ENCODE measurements at regions of chr19 and their contacts with region 1.

Region 1: GRCh38 chr19:7680606-7681339 is at the start of gene TRAPPC5:
- DNase-seq: peak; percentile 81 to 88 (median 82)
- H3K4me3 ChIP-seq: peak within 1 kb of the TSS; percentile 83
- H3K4me3 Mint-ChIP-seq: peak within 1 kb of the TSS; percentile 86 to 96 (median 86)
- H3K27ac ChIP-seq: peak within 1 kb of the TSS; percentile 82
- H3K27ac Mint-ChIP-seq: peak within 1 kb of the TSS; percentile 81 to 97 (median 92)
- H3K4me1 ChIP-seq: peaks cover 35% of the 10 kb centered on the region
- H3K4me1 Mint-ChIP-seq: peaks cover 30 to 57% (median 37%) of the 10 kb centered on the region in 3 donors
- H3K27me3 ChIP-seq: no peaks in the 10 kb centered on the region
- H3K27me3 Mint-ChIP-seq: peaks cover 12 to 30% of the 10 kb centered on the region in 2 donors
- total RNA-seq, gene TRAPPC5: 63.5 to 70.1 TPM

Region 2: GRCh38 chr19:7562646-7563393 is 118.0 kb before region 1 on chr19:
- CTCF ChIA-PET with region 1: interaction called, 13 read pairs
- POLR2A ChIA-PET with region 1: no interaction called
- DNase-seq: no peak
- H3K4me3 ChIP-seq: no peak overlapping the region
- H3K4me3 Mint-ChIP-seq: no peak overlapping the region
- H3K27ac ChIP-seq: no peak overlapping the region
- H3K27ac Mint-ChIP-seq: no peak overlapping the region
- H3K4me1 ChIP-seq: no peaks in the 10 kb centered on the region
- H3K4me1 Mint-ChIP-seq: no peaks in the 10 kb centered on the region
- H3K27me3 ChIP-seq: no peaks in the 10 kb centered on the region
- H3K27me3 Mint-ChIP-seq: no peaks in the 10 kb centered on the region

Region 3: GRCh38 chr19:7652061-7652641 is 28.6 kb before region 1 on chr19:
- CTCF ChIA-PET with region 1: interaction called, 33 read pairs
- POLR2A ChIA-PET with region 1: interaction called, 3 read pairs
- DNase-seq: peak; percentile 82 to 89 (median 85)
- H3K4me3 ChIP-seq: peak overlapping the region; percentile 73
- H3K4me3 Mint-ChIP-seq: peak overlapping the region; percentile 45 to 84 (median 76)
- H3K27ac ChIP-seq: peak overlapping the region; percentile 39
- H3K27ac Mint-ChIP-seq: peak overlapping the region; percentile 67 to 99 (median 96)
- H3K4me1 ChIP-seq: peaks cover 8% of the 10 kb centered on the region
- H3K4me1 Mint-ChIP-seq: peaks cover 9 to 12% (median 11%) of the 10 kb centered on the region in 3 donors
- H3K27me3 ChIP-seq: no peaks in the 10 kb centered on the region
- H3K27me3 Mint-ChIP-seq: peaks cover 0 to 5% of the 10 kb centered on the region in 2 donors

Region 4: GRCh38 chr19:7699417-7700401 is 18.9 kb after region 1 on chr19:
- CTCF ChIA-PET with region 1: interaction called, 15 read pairs
- POLR2A ChIA-PET with region 1: no interaction called
- DNase-seq: no peak
- H3K4me3 ChIP-seq: no peak overlapping the region
- H3K4me3 Mint-ChIP-seq: no peak overlapping the region
- H3K27ac ChIP-seq: no peak overlapping the region
- H3K27ac Mint-ChIP-seq: peak overlapping the region in 2 of 8 donors; percentile 15 to 77
- H3K4me1 ChIP-seq: peaks cover 9% of the 10 kb centered on the region
- H3K4me1 Mint-ChIP-seq: peaks cover 3 to 18% (median 11%) of the 10 kb centered on the region in 3 donors
- H3K27me3 ChIP-seq: no peaks in the 10 kb centered on the region
- H3K27me3 Mint-ChIP-seq: peaks cover 17 to 23% of the 10 kb centered on the region in 2 donors

Region 5: GRCh38 chr19:7710616-7711015 is 29.8 kb after region 1 on chr19:
- CTCF ChIA-PET with region 1: interaction called, 10 read pairs
- POLR2A ChIA-PET with region 1: interaction called, 4 read pairs
- DNase-seq: no peak
- H3K4me3 ChIP-seq: no peak overlapping the region
- H3K4me3 Mint-ChIP-seq: no peak overlapping the region
- H3K27ac ChIP-seq: no peak overlapping the region
- H3K27ac Mint-ChIP-seq: peak overlapping the region in 2 of 8 donors; percentile 20
- H3K4me1 ChIP-seq: peaks cover 26% of the 10 kb centered on the region
- H3K4me1 Mint-ChIP-seq: peaks cover 15 to 30% (median 17%) of the 10 kb centered on the region in 3 donors
- H3K27me3 ChIP-seq: no peaks in the 10 kb centered on the region
- H3K27me3 Mint-ChIP-seq: peaks cover 0 to 3% of the 10 kb centered on the region in 2 donors

Region 6: GRCh38 chr19:7799640-7800355 is 119.0 kb after region 1 on chr19:
- CTCF ChIA-PET with region 1: interaction called, 61 read pairs
- POLR2A ChIA-PET with region 1: no interaction called
- DNase-seq: peak; percentile 18 to 62 (median 44)
- H3K4me3 ChIP-seq: no peak overlapping the region
- H3K4me3 Mint-ChIP-seq: no peak overlapping the region
- H3K27ac ChIP-seq: no peak overlapping the region
- H3K27ac Mint-ChIP-seq: peak overlapping the region in 2 of 8 donors; percentile 27 to 50
- H3K4me1 ChIP-seq: peaks cover 11% of the 10 kb centered on the region
- H3K4me1 Mint-ChIP-seq: peaks cover 4 to 12% (median 11%) of the 10 kb centered on the region in 3 donors
- H3K27me3 ChIP-seq: peaks cover 11% of the 10 kb centered on the region
- H3K27me3 Mint-ChIP-seq: peaks cover 17 to 42% of the 10 kb centered on the region in 2 donors

Region 7: GRCh38 chr19:7879836-7880235 is 199.1 kb after region 1 on chr19:
- CTCF ChIA-PET with region 1: no interaction called
- POLR2A ChIA-PET with region 1: no interaction called
- DNase-seq: no peak
- H3K4me3 ChIP-seq: no peak overlapping the region
- H3K4me3 Mint-ChIP-seq: no peak overlapping the region
- H3K27ac ChIP-seq: no peak overlapping the region
- H3K27ac Mint-ChIP-seq: no peak overlapping the region
- H3K4me1 ChIP-seq: peaks cover 2% of the 10 kb centered on the region
- H3K4me1 Mint-ChIP-seq: peaks cover 0 to 3% (median 3%) of the 10 kb centered on the region in 3 donors
- H3K27me3 ChIP-seq: peaks cover under 1% of the 10 kb centered on the region
- H3K27me3 Mint-ChIP-seq: peaks cover 4 to 6% of the 10 kb centered on the region in 2 donors